ENCODE measurements at regions of chr7 and their contacts with region 1.

Region 1: DNA sequence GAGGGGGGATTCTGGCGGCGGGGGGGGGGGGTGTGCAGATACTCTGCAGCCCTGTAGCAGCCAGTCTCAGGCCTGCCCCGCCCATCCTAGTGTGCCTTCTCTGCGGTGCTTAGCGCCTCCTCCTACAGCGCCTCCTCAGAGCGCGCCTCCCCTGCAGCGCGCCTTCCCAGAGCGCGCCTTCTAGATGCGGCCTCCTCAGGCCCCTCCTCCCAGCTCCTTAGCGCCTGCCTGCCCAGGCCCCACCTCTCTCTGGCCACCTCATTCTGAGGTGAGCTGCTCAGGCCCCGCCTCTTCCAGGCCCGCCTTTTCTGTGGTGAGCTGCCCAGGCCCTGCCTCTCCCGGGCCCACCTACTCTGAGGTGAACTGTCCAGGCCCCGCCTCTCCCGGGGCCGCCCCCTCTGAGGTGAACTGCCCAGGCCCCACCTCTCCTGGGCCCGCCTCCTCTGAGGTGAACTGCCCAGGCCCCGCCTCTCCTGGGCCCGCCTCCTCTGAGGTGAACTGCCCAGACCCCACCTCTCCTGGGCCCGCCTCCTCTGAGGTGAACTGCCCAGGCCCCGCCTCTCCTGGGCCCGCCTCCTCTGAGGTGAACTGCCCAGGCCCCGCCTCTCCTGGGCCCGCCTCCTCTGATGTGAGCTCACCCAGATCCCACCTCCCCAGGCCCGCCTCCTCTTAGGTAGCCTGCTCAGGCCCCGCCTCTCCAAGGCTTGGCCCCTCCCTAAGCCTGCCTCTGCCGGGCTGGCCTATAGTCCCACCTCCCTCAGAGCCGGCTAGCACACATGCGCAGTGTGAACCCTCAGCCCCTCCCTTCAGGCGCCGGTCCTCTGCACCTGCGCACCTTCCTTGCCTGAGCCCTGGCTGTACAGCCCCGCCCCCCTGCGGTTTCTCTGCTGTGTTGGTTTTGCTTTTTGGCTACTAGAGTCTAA is 2.1 kb upstream of the SGCE start:
- DNase-seq: peak; percentile 94
- H3K4me3 Mint-ChIP-seq: peak overlapping the region; percentile 74
- H3K27ac Mint-ChIP-seq: no peak overlapping the region
- H3K4me1 Mint-ChIP-seq: no peaks in the 10 kb centered on the region
- H3K27me3 Mint-ChIP-seq: no peaks in the 10 kb centered on the region
- CTCF ChIP-seq: no peak

Region 2: GRCh38 chr7:94355454-94355853 is 302.6 kb before region 1 on chr7:
- CTCF ChIA-PET with region 1: no interaction called
- POLR2A ChIA-PET with region 1: no interaction called
- intact Hi-C with region 1: no loop called
- DNase-seq: no peak
- H3K4me3 Mint-ChIP-seq: no peak overlapping the region
- H3K27ac Mint-ChIP-seq: no peak overlapping the region
- H3K4me1 Mint-ChIP-seq: no peaks in the 10 kb centered on the region
- H3K27me3 Mint-ChIP-seq: no peaks in the 10 kb centered on the region
- CTCF ChIP-seq: no peak

Region 3: GRCh38 chr7:94481279-94481678 is 176.8 kb before region 1 on chr7:
- CTCF ChIA-PET with region 1: no interaction called
- POLR2A ChIA-PET with region 1: no interaction called
- intact Hi-C with region 1: no loop called
- DNase-seq: no peak
- H3K4me3 Mint-ChIP-seq: no peak overlapping the region
- H3K27ac Mint-ChIP-seq: no peak overlapping the region
- H3K4me1 Mint-ChIP-seq: peaks cover 6% of the 10 kb centered on the region
- H3K27me3 Mint-ChIP-seq: peaks cover 26% of the 10 kb centered on the region
- CTCF ChIP-seq: no peak

Region 4: DNA sequence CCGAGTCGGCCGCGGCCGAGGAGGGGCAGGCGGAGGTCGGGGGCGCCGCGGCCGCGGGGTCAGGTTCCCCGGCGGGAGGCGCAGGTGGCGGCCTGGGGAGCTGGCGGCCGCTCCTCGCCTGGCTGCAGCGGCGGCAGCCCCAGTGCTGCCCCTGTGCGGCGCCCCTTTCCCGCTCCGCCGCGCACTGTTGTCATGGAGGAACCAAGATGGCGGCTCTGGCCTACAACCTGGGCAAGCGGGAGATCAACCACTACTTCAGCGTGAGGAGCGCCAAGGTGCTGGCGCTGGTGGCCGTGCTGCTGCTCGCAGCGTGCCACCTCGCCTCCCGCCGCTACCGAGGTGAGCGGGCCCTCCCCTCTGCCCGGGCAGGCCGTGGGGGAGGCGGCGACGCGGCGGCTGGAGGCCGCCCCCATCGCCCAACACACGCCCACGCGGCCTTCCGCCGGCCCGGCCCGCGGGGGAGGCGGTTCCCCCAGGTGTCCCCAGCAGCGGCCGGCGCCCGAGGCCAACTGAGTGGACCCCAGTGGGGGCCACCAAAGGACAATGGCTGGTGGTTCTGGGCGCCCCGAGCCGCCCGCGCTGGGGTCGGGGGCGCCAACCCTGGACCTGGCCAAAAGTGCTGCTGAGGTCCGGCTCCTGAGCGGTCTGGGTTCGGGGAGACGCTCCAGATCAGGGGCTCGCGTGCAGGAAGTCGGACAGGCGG is 148.0 kb before region 1 on chr7:
- CTCF ChIA-PET with region 1: interaction called, 5 read pairs
- POLR2A ChIA-PET with region 1: interaction called, 21 read pairs
- intact Hi-C with region 1: loop called (anchors 2 kb)
- DNase-seq: peak; percentile 65
- H3K4me3 Mint-ChIP-seq: peak overlapping the region; percentile 69
- H3K27ac Mint-ChIP-seq: peak overlapping the region; percentile 43
- H3K4me1 Mint-ChIP-seq: peaks cover 32% of the 10 kb centered on the region
- H3K27me3 Mint-ChIP-seq: no peaks in the 10 kb centered on the region
- CTCF ChIP-seq: no peak

Region 5: DNA sequence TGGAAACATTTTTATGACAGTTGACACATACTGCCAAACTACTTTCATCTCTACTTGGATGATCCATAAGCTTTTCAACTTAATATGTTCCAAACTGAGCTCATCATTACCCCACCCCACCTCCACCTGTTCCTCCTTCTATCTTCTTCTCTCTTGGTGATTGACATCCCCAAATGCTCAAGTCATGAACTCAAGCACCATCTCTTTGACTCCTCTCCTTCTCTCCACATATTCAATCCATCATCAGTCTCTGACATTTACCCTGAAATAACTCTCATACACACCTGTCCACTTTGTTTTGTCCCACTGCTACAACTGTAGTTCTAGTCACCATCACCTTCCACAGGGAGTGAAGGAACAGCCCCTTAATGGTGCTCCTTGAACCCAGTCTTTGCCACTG is 45.4 kb before region 1 on chr7:
- CTCF ChIA-PET with region 1: no interaction called
- POLR2A ChIA-PET with region 1: no interaction called
- intact Hi-C with region 1: no loop called
- DNase-seq: no peak
- H3K4me3 Mint-ChIP-seq: no peak overlapping the region
- H3K27ac Mint-ChIP-seq: no peak overlapping the region
- H3K4me1 Mint-ChIP-seq: no peaks in the 10 kb centered on the region
- H3K27me3 Mint-ChIP-seq: no peaks in the 10 kb centered on the region
- CTCF ChIP-seq: no peak

Region 6: DNA sequence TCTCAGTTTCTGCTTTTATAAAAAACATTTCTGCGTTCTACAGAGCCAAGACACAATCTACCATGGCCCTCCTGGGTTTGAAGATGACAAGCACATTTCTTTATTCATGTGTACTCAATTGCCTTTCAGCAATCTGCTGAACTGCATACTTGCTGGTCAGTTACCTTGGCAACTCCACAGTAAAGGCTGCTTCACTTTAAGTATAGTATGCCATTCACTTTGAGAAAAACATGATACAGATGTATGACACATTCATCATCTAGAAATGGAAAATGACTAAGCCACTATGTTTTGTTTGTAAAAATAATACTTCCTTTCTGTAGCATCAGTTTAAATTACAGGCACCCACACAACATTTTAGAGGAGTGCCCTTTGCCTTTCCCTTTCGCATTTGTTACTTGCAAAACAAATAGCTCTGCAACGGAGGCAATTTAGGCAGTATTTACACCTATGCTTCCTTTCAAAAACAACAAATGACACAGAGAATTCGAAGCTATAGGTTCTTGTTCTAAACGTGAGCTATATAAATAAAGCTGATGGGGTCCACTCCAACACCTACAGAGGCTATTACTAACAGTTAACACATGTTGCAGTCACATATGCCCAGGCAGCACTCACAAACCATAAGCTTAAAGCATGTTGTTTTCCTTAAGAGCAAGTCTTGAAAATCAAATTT is 25.6 kb before region 1 on chr7:
- CTCF ChIA-PET with region 1: interaction called, 9 read pairs
- POLR2A ChIA-PET with region 1: interaction called, 5 read pairs
- intact Hi-C with region 1: loop called (anchors 2 kb)
- DNase-seq: peak; percentile 59
- H3K4me3 Mint-ChIP-seq: no peak overlapping the region
- H3K27ac Mint-ChIP-seq: peak overlapping the region; percentile 16
- H3K4me1 Mint-ChIP-seq: peaks cover 16% of the 10 kb centered on the region
- H3K27me3 Mint-ChIP-seq: no peaks in the 10 kb centered on the region
- CTCF ChIP-seq: no peak

Region 7: DNA sequence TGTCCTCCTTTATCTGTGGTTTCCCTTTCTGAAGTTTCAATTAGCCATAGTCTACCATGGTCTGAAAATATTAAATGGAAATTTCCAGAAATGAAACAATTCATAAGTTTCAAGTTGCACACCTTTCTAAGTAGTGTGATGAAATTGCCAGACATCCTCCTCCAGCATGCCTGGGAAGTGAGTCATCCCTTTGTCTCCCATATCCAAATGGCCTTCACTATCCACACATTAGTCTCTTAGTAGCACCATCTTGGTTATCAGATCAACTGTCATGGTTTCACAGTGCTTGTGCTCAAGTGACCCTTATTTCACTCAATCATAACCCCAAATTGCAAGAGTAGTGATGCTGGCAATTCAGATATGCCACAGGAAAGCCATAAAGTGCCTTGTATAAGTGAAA is 165.9 kb after region 1 on chr7:
- CTCF ChIA-PET with region 1: no interaction called
- POLR2A ChIA-PET with region 1: no interaction called
- intact Hi-C with region 1: loop called (anchors 10 kb)
- DNase-seq: peak; percentile 80
- H3K4me3 Mint-ChIP-seq: no peak overlapping the region
- H3K27ac Mint-ChIP-seq: peak overlapping the region; percentile 77
- H3K4me1 Mint-ChIP-seq: peaks cover 12% of the 10 kb centered on the region
- H3K27me3 Mint-ChIP-seq: no peaks in the 10 kb centered on the region
- CTCF ChIP-seq: no peak

Region 8: DNA sequence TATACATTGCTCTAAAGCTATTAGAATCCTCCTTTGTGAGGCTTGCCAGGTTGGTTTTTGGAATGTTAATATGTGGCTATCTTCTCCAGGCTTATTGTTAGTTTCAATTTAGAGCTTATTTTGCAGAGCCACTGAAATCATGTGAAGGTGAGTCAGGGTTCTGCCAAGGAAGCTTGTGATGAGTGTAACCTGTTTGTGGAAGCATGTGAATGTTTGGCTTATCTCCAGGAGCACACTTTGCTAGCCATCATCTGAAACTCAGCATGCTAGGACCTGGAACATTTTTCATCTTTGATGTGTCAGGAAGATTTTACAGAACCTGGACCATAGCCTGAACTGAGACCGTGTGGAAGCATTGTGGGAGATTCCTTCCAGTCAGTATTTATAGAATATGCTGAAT is 446.7 kb after region 1 on chr7:
- CTCF ChIA-PET with region 1: no interaction called
- POLR2A ChIA-PET with region 1: interaction called, 5 read pairs
- intact Hi-C with region 1: loop called (anchors 10 kb)
- DNase-seq: peak; percentile 72
- H3K4me3 Mint-ChIP-seq: peak overlapping the region; percentile 25
- H3K27ac Mint-ChIP-seq: peak overlapping the region; percentile 12
- H3K4me1 Mint-ChIP-seq: peaks cover 11% of the 10 kb centered on the region
- H3K27me3 Mint-ChIP-seq: no peaks in the 10 kb centered on the region
- CTCF ChIP-seq: no peak

Region 9: GRCh38 chr7:95476904-95477594 is 819.0 kb after region 1 on chr7:
- CTCF ChIA-PET with region 1: interaction called, 5 read pairs
- POLR2A ChIA-PET with region 1: no interaction called
- intact Hi-C with region 1: loop called (anchors 5 kb)
- DNase-seq: peak; percentile 79
- H3K4me3 Mint-ChIP-seq: no peak overlapping the region
- H3K27ac Mint-ChIP-seq: no peak overlapping the region
- H3K4me1 Mint-ChIP-seq: peaks cover 10% of the 10 kb centered on the region
- H3K27me3 Mint-ChIP-seq: no peaks in the 10 kb centered on the region
- CTCF ChIP-seq: peak; percentile 72